HepG2 (cell line): ENCODE measurements at regions of chr12 and their contacts with region 1.

Region 1: DNA sequence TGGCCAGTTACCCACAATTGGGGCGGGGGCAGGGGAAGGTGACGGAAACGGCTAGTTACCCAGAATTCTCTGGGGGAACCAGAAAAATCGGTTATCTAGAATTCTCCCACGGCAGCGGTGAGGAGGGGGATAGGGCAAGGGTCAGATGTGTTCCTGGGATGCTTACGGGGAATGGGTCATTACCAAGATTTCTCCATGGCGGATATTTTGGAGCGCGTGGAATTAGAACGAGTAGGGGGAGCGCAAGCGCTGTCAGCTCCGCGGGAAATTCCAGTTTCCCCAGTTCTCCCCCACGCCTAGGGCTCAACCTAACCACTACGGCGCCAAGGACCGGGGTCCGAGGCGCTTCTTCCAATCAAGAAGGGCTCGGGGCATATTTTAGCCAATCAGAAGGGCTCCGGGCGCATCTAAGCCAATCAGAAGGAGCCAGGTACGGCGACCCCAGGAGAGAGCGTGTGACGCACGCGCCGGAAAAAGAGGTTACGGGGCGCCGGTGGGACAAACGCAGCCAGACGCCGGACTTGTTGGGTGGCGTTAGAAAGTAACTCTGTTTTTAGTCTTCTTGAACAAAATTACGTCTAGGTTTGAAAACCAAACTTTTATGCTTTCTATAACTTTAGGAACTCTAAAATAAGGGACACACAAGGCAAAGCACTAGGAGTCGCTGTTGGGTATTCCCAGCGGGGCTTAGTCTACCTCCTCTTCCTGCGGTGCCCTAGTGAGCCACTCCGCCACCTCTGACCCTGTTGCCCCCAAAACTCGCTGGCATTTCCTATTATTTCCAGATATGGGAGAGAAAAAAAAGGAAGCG is at the start of gene PAN2:
- DNase-seq: peak; percentile 96
- ATAC-seq: peak; percentile 99
- H3K4me3 ChIP-seq: peak within 1 kb of the TSS; percentile 60 to 74 (median 71)
- H3K27ac ChIP-seq: peak within 1 kb of the TSS; percentile 88
- H3K4me1 ChIP-seq: peaks cover 48% of the 10 kb centered on the region
- H3K27me3 ChIP-seq: no peaks in the 10 kb centered on the region; a peak in 1 of 5 replicates
- CTCF ChIP-seq: no peak; the same call in 1 of the 2 replicates
- EP300 ChIP-seq: no peak
- POLR2A ChIP-seq: peak; percentile 72 to 74
- RAD21 ChIP-seq: peak; percentile 67; the same call in 1 of the 2 replicates
- total RNA-seq, gene PAN2: 14.8 and 27.2 TPM in 2 replicates

Region 2: DNA sequence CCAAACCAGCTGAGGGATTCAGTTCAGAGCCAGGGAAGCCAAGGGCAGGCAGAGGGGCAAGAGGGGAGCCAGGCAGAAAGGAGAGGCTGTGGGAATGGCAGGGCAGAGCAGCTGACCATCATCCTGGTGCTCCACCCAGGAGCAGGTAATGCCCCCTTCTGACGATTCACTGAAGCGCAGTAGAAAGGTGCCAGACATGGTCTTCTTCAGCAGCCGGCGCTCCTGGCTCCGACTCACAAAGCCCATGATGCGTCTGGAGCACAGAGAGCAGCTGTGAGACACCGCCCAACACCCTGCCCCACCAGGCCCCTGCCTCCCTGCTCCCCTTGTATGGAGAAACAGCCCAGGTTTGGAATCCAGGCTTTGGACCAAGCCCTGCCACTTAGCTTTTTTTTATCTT is 12.8 kb after region 1 on chr12:
- CTCF ChIA-PET with region 1: no interaction called
- POLR2A ChIA-PET with region 1: interaction called, 10 read pairs
- in situ Hi-C with region 1: no loop called
- intact Hi-C with region 1: no loop called
- DNase-seq: no peak
- ATAC-seq: peak; percentile 44
- H3K4me3 ChIP-seq: no peak overlapping the region
- H3K27ac ChIP-seq: no peak overlapping the region
- H3K4me1 ChIP-seq: peaks cover 4% of the 10 kb centered on the region
- H3K27me3 ChIP-seq: no peaks in the 10 kb centered on the region
- CTCF ChIP-seq: peak; percentile 49
- EP300 ChIP-seq: no peak
- POLR2A ChIP-seq: no peak
- RAD21 ChIP-seq: no peak

Region 3: DNA sequence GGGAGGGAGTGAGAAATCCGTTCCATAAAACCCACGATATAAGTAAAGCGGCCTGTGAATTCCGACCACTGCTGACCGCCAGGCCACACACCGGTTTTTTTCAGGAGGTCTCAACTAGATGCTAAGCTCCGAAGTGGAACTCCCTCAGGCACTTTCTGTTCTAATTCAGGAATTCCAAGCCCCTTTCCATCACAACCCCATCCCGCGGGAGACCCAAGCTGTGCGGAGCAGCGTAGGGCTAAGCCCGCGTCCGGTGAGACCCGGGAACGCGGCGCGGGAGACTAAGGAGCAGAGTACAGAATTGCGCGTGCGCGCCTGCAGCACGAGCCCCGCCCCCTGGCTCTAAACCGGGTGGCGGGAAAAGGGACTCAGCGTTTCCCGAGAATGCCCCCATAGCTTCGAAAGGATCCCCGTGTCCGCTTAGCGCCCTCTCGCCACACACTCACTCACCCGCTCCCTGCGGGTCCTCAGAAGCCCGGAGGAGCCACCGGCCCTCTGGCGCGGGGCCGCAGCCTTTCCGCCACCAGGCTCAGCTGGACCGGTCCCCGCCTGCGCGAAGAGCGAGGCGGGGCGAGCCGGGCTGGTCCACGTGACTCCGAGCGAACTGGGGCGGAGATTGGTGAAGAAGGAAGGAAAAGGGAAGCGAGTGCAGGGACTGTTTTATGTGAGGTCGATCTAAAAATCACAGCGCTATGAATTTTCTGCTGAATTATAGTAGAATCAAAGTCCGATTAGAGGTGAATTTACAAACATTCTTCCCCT is 115.2 kb after region 1 on chr12 and contains the start of gene TIMELESS:
- CTCF ChIA-PET with region 1: no interaction called
- POLR2A ChIA-PET with region 1: interaction called, 16 read pairs
- in situ Hi-C with region 1: no loop called
- intact Hi-C with region 1: no loop called
- DNase-seq: peak; percentile 82
- ATAC-seq: peak; percentile 96
- H3K4me3 ChIP-seq: peak within 1 kb of the TSS; percentile 68 to 96 (median 77)
- H3K27ac ChIP-seq: peak within 1 kb of the TSS; percentile 92
- H3K4me1 ChIP-seq: peaks cover 24% of the 10 kb centered on the region
- H3K27me3 ChIP-seq: no peaks in the 10 kb centered on the region
- CTCF ChIP-seq: peak; percentile 45
- EP300 ChIP-seq: no peak
- POLR2A ChIP-seq: peak; percentile 61 to 82
- RAD21 ChIP-seq: peak; percentile 47
- total RNA-seq, gene TIMELESS: 20.3 and 25.6 TPM in 2 replicates

Region 4: GRCh38 chr12:56461235-56462159 is 127.6 kb after region 1 on chr12:
- CTCF ChIA-PET with region 1: interaction called, 5 read pairs
- POLR2A ChIA-PET with region 1: interaction called, 11 read pairs
- in situ Hi-C with region 1: no loop called
- intact Hi-C with region 1: loop called (anchors 1 kb)
- DNase-seq: peak; percentile 67
- ATAC-seq: no peak
- H3K4me3 ChIP-seq: no peak overlapping the region
- H3K27ac ChIP-seq: peak overlapping the region; percentile 54
- H3K4me1 ChIP-seq: peaks cover 62% of the 10 kb centered on the region
- H3K27me3 ChIP-seq: no peaks in the 10 kb centered on the region
- CTCF ChIP-seq: no peak
- EP300 ChIP-seq: peak; percentile 16 to 42; a peak in 1 of 4 replicates
- POLR2A ChIP-seq: no peak
- RAD21 ChIP-seq: no peak

Region 5: DNA sequence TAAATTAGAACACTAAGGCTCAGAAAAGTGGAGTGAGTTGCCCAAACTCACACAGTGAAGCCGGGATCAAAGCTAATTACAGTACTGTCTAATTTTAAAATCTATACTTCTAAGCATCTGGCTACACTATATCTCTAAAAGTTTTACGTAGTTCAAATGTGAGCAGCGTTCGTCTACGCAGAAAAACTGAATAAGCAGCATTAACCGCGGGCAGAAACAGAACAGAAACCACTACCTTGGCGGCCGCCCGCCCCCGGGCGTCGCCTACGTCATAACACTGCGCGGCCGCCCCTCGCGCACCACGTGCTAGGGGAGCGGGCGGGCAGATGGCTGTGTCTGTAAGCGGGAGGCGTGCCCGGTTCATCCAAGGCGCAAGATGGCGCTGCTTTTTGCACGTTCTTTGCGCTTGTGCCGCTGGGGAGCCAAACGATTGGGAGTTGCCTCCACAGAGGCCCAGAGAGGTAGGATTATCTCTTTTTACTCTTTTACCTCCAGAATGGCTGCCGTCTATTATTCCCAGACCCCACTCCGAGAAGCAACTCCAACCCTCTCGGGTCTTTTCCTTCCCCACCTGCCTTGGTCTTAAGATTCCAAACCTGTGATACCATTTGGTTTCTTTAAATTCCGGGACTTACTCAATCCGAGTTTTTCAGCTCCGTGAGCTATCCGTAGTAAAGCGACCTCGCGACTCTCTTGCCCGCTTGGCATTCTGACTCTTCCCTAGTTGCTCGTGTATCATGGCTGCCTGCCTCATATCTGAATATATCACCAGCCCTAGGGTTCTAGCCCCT is 134.5 kb after region 1 on chr12 and contains the start of gene SPRYD4:
- CTCF ChIA-PET with region 1: interaction called, 5 read pairs
- POLR2A ChIA-PET with region 1: interaction called, 4 read pairs
- in situ Hi-C with region 1: no loop called
- intact Hi-C with region 1: loop called (anchors 1 kb)
- DNase-seq: peak; percentile 82
- ATAC-seq: peak; percentile 92
- H3K4me3 ChIP-seq: peak within 1 kb of the TSS; percentile 79 to 93 (median 80)
- H3K27ac ChIP-seq: peak within 1 kb of the TSS; percentile 86
- H3K4me1 ChIP-seq: peaks cover 23% of the 10 kb centered on the region
- H3K27me3 ChIP-seq: no peaks in the 10 kb centered on the region; a peak in 1 of 5 replicates
- CTCF ChIP-seq: peak; percentile 90
- EP300 ChIP-seq: 0 out of 4 replicates have a peak, but pooled peaks of 1 of the 2 experiments have one; percentile 9
- POLR2A ChIP-seq: peak; percentile 90
- RAD21 ChIP-seq: peak; percentile 54; the same call in 1 of the 2 replicates
- total RNA-seq, gene SPRYD4: 4.1 and 4.5 TPM in 2 replicates